Adrenal gland (tissue), 19 donors: ENCODE measurements at regions of chr11 and their contacts with region 1.

Region 1: DNA sequence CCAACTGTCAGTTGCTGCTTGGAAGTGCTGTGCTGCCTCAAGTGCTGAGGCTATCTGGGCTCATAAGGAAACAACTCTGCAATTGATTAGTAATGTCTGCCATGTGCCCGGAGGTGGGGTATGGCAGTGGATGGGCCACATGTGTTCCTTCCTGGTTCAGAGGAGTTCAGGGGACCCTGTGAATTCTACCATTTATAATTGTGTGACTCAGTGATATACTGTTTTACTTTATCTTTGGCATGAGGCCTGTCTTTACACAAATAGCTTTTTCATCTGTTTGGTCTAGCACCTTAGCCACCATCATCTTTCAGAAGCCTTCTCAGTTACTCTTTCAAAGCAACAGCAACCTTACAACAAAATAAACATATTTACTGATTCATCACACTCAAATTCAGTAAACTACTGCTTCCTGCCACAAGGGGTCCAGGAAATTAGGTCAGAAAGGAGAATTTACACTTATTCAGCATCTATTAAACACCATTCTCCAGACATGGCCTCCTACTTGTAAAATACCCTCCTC is 20.9 kb downstream of the DKK3 start:
- DNase-seq: peak in 1 of 7 donors; percentile 7
- H3K4me3 ChIP-seq: no peak overlapping the region
- H3K27ac ChIP-seq: peak overlapping the region in 2 of 5 donors; percentile 4 to 71
- H3K4me1 ChIP-seq: peaks cover 0 to 14% of the 10 kb centered on the region in 2 donors
- H3K27me3 ChIP-seq: no peaks in the 10 kb centered on the region
- CTCF ChIP-seq: peak in 5 of 6 experiments; percentile 20 to 50 (median 39)
- POLR2A ChIP-seq: no peak

Region 2: DNA sequence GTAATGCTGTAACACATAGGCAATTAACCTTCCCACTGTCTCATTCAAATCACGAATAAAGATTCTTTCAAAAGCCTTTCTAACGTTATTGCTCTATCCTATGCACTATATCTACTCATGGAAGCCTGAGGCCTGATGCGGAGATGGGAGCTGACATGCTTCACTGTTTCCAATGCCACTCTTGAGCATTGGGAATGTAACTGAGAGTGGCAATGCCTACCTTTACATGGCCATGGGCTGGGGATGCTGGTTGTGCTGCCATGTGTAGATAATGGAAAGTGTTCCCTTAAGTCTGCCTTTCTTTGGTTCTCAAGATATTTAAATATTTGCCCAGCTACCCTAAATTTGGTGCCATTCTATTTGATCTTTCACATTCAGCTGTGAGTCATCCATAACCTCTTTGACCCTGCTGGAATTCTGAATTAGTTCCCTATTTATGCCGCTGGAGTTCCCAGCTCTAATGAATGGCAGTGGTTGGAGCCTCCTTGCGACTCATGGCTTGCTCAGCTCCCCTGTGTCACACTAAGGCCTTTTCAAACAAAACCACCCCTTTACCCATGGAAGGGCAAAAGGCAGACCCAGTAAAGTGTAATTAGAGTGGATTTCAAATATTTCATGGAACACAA is 42.3 kb after region 1 on chr11:
- intact Hi-C with region 1: loop called in 1 of 2 experiments (anchors 10 kb)
- DNase-seq: no peak
- H3K4me3 ChIP-seq: no peak overlapping the region
- H3K27ac ChIP-seq: peak overlapping the region in 1 of 5 donors; percentile 68
- H3K4me1 ChIP-seq: peaks cover 10 to 12% of the 10 kb centered on the region in 2 donors
- H3K27me3 ChIP-seq: no peaks in the 10 kb centered on the region
- CTCF ChIP-seq: no peak
- POLR2A ChIP-seq: no peak